ENCODE measurements at regions of chr6 and their contacts with region 1.

Region 1: GRCh38 chr6:119742188-119742803 is 392.7 kb upstream of the MAN1A1 start:
- DNase-seq: peak; percentile 86
- H3K4me3 Mint-ChIP-seq: no peak overlapping the region
- H3K27ac Mint-ChIP-seq: no peak overlapping the region
- H3K4me1 Mint-ChIP-seq: no peaks in the 10 kb centered on the region
- H3K27me3 Mint-ChIP-seq: peaks cover 10% of the 10 kb centered on the region

Region 2: DNA sequence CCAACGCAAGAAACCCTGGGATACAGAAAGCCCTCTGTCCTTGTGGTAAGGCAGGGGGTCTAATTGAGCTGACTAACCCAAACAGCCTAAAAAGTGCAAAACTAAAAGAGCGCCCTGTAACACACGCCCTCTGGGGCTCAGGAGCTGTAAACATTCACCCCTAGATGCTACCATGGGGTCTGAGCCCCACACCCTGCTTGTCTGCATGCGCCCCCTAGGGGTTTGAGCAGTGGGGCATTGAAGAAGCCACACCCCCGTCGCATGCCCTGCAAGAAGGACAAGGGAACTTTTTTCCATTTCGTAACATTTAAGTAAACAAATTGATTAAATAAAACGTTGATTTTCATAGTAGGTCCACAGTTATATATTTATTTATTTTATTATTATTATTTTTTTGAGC is 224.2 kb after region 1 on chr6:
- intact Hi-C with region 1: loop called (anchors 10 kb)
- DNase-seq: peak; percentile 73
- H3K4me3 Mint-ChIP-seq: no peak overlapping the region
- H3K27ac Mint-ChIP-seq: no peak overlapping the region
- H3K4me1 Mint-ChIP-seq: no peaks in the 10 kb centered on the region
- H3K27me3 Mint-ChIP-seq: no peaks in the 10 kb centered on the region

Region 3: DNA sequence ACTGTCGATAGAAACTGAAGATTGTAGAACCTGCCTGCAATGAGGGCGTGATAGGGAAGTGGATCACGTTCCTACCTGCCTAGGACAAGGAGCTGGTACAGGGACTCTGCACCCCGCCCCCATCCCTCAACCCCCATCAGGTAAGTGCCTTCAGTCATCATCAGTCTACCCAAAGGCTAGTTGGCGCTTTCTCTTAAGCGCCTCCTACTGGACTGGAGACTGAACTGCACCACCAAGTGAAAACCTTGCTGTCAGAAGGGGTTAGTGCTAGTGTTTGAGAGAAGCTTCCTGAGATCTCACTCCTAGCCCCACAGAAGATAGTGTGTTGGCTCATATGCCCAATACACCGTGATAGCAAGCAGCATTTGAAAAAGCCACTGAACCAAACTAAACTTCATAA is 313.8 kb after region 1 on chr6:
- intact Hi-C with region 1: loop called (anchors 2 kb)
- DNase-seq: peak; percentile 63
- H3K4me3 Mint-ChIP-seq: no peak overlapping the region
- H3K27ac Mint-ChIP-seq: no peak overlapping the region
- H3K4me1 Mint-ChIP-seq: no peaks in the 10 kb centered on the region
- H3K27me3 Mint-ChIP-seq: no peaks in the 10 kb centered on the region